ENCODE measurements at regions of chr6 and their contacts with region 1.

Region 1: GRCh38 chr6:28383235-28384142 is 16.1 kb downstream of the ZSCAN12 start:
- DNase-seq: peak; percentile 24
- ATAC-seq: no peak
- H3K4me3 Mint-ChIP-seq: peak overlapping the region; percentile 16
- H3K27ac Mint-ChIP-seq: no peak overlapping the region
- H3K4me1 Mint-ChIP-seq: peaks cover 15% of the 10 kb centered on the region
- H3K27me3 Mint-ChIP-seq: no peaks in the 10 kb centered on the region

Region 2: GRCh38 chr6:28011722-28012121 is 371.8 kb before region 1 on chr6:
- CTCF ChIA-PET with region 1: no interaction called
- POLR2A ChIA-PET with region 1: no interaction called
- DNase-seq: no peak
- ATAC-seq: no peak
- H3K4me3 Mint-ChIP-seq: no peak overlapping the region
- H3K27ac Mint-ChIP-seq: no peak overlapping the region
- H3K4me1 Mint-ChIP-seq: peaks cover 7% of the 10 kb centered on the region
- H3K27me3 Mint-ChIP-seq: peaks cover 5% of the 10 kb centered on the region

Region 3: DNA sequence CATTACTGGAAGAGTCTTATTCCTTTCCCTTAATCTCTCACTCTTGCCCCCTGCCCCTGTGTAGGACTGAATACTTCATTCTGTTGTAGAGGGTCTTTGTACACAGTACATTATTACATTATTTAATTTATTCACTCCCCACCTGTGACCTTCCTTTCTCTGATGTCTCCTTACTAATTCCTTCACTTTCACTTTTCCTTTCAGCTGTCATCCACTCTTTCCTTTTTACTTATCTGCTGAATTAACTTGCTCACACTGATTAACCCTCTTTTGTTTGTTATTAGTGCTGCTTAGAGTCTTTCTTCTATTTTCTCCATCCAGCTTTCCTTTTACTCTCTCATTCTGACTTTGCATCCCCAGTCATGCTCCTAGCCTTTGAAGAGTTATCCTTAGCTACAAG is 108.6 kb before region 1 on chr6:
- CTCF ChIA-PET with region 1: no interaction called
- POLR2A ChIA-PET with region 1: no interaction called
- DNase-seq: no peak
- ATAC-seq: no peak
- H3K4me3 Mint-ChIP-seq: peak overlapping the region; percentile 17
- H3K27ac Mint-ChIP-seq: peak overlapping the region; percentile 9
- H3K4me1 Mint-ChIP-seq: peaks cover 11% of the 10 kb centered on the region
- H3K27me3 Mint-ChIP-seq: peaks cover 3% of the 10 kb centered on the region

Region 4: DNA sequence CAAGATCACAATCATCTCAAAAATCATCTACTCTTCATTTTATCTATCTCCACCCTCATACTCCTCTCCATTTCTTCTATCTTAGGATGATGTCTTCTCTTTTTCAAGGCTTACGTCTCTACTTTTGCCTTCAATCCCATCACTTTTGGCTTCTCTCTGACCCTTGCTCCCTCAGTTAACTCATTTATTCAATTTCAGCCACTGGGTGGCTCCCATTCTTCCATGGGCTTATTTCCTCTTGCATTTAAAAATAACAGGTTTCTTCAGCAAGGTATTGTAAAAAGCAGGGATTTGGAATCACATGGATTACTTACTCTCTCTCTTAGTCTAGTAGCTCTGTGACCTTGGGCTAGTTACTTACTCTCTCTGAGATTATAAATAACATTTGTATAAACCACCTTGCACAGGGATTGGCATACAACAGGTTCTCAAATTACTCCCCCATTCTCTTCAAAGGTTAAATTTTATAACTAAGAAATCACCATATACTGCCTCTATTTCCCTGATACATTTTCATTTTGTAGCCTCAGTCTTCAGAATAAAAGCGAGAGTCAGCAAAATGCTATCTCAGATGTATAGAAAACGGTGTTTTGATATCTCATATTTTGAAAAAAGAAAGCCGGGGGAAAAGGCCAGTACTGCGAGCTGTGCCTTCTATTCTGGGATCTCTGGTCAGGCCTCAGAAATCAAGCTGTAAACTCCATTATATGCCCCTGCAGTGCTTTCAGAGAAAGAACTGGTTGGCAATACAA is 10.6 kb after region 1 on chr6:
- CTCF ChIA-PET with region 1: interaction called, 14 read pairs
- POLR2A ChIA-PET with region 1: no interaction called
- DNase-seq: no peak
- ATAC-seq: no peak
- H3K4me3 Mint-ChIP-seq: no peak overlapping the region
- H3K27ac Mint-ChIP-seq: peak overlapping the region; percentile 5
- H3K4me1 Mint-ChIP-seq: peaks cover 55% of the 10 kb centered on the region
- H3K27me3 Mint-ChIP-seq: no peaks in the 10 kb centered on the region

Region 5: GRCh38 chr6:29676981-29677601 is 1293.6 kb after region 1 on chr6:
- CTCF ChIA-PET with region 1: no interaction called
- POLR2A ChIA-PET with region 1: no interaction called
- DNase-seq: no peak
- ATAC-seq: no peak
- H3K4me3 Mint-ChIP-seq: no peak overlapping the region
- H3K27ac Mint-ChIP-seq: no peak overlapping the region
- H3K4me1 Mint-ChIP-seq: peaks cover 10% of the 10 kb centered on the region
- H3K27me3 Mint-ChIP-seq: peaks cover 9% of the 10 kb centered on the region